Activated CD4-positive, alpha-beta memory T cell treated with anti-CD3 and anti-CD28 coated beads, Interleukin-2, amount 10 ng/mL, durations not matched to agents 7 days and 5 days (primary cell): ENCODE measurements at regions of chr5 and their contacts with region 1.

Region 1: DNA sequence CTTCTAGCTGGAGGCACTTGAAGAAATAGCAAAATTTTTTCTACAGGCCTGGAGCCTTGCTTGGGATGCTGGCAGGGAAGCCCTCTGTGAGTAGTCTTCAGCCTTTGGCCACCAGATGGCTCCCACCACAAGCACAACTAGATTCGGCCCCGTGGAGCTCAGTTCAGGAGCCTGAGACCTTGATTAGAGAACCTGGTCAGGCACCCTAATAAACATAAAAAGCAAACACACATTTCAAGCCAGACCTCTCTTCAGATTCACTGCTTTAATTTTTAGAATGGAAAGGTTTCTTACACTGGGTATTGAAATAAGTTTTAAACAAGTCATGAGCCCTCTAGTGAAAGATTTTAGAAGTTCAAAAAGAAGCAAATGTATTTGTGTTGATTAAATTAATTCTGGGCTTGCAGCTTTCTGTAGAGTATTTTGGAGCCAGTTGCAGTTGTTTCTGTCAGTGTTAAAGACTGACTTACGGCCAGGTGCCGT is 41.4 kb downstream of the GLRX start:
- DNase-seq: peak; percentile 75
- H3K4me3 Mint-ChIP-seq: peak overlapping the region; percentile 34
- H3K27ac Mint-ChIP-seq: no peak overlapping the region
- H3K4me1 Mint-ChIP-seq: peaks cover 27% of the 10 kb centered on the region
- H3K27me3 Mint-ChIP-seq: no peaks in the 10 kb centered on the region

Region 2: DNA sequence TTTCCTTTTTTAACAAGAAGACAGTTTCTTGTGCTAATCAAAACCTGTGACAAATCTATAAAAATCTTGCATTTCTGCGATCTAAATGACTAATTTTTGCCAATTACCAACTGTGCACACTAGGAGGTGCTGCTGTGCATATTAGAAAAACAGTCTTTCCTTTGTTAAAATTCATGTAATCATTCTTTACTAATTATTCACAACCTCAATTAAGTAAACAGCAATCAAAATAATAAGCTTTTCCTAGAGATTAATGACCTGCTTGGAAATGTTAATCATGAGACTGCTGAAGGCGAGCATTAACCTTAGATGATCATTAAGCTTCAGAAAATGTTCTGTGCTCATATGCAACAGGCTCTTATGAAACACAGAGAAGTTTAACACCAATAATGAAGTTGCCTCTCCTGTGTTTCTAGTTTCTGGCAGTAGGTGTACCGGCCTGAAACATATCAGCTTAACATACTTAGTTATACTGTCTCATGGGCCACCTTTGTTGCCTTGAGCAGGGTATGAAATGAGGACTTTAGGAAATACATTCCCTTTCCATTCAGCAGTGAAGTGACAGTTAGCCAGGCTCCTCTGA is 116.8 kb before region 1 on chr5:
- CTCF ChIA-PET with region 1: interaction called, 41 read pairs
- POLR2A ChIA-PET with region 1: interaction called, 3 read pairs
- DNase-seq: peak; percentile 23
- H3K4me3 Mint-ChIP-seq: no peak overlapping the region
- H3K27ac Mint-ChIP-seq: no peak overlapping the region
- H3K4me1 Mint-ChIP-seq: no peaks in the 10 kb centered on the region
- H3K27me3 Mint-ChIP-seq: peaks cover 3% of the 10 kb centered on the region

Region 3: DNA sequence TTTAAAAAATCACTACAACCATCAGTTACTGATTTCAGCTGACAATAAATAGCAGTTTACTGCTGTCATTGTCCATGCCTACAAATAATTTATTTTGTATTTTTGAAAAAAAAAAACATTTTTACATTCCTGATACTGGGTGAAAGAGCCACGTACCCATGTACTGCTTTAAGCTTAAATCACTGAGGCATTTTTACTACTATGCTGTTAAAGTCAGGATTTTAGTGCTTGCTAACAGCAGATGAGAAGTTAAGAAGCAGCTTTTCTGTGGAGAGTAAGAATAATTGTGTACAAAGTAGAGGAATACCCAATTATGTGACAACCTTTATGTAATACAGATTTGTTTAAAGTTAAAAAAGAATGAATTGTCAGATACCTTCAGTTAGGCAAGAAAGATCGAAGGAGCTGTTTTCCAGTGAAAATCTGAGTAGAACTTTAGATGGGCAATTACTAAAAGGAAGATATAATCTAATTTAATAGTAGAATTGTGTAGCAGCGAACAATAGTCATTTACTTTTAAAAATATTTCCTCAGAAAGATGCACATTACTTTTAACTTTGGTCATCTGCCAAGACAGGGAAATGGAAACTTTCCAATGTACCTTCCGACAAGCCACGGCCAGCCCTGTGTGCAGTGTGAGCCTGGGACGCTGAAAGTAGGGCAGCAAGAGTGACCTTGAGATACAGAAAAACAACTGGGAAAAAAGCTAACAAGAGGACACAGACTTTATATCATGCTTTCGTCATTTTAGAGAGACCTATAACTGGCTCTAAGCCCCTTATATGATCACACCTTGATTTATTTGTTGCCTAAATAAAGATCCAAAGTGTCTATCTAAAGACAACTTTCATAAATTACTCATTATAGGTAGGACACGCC is 10.1 kb before region 1 on chr5:
- CTCF ChIA-PET with region 1: interaction called, 26 read pairs
- POLR2A ChIA-PET with region 1: no interaction called
- DNase-seq: no peak
- H3K4me3 Mint-ChIP-seq: no peak overlapping the region
- H3K27ac Mint-ChIP-seq: no peak overlapping the region
- H3K4me1 Mint-ChIP-seq: peaks cover 2% of the 10 kb centered on the region
- H3K27me3 Mint-ChIP-seq: peaks cover 9% of the 10 kb centered on the region

Region 4: DNA sequence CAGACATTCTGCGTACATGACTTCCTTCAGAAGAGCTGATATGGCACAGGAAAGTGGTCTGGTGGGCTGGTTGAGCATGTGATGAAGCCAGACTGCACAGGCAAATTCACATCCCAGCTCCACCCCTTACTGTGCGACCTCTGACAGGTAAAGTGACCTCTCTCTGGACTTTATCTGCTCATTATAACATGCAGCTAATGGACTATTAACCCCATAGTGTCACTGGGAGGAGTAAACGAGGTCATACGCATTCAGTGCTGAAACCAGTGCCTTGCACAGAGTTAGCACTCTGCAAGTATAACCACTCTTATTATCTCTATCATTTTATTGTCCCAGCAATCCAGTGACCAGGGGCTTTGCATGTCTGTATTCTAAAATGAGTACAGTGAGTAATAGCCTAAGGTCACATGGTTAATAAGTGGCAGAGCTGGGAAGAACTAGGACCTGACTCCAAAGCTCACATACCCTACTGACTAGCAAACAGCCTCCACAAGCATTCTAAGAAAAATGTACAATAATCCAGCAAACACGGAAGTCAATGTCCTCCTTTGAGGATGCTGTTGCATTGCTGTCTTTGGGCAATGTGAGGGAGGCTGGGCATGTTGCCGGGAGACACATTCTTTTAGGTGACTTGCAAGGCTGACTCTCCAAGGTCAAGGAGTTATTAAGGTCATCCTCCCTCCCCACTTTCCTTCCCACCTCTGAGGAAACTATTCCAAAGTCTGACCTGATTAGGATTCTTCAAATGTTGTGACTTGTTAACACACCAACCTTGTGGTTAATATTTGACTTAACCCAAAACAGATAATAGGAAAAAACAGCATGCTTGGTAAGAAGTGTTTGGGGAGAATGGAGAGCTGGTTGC is 22.4 kb after region 1 on chr5:
- CTCF ChIA-PET with region 1: interaction called, 79 read pairs
- POLR2A ChIA-PET with region 1: interaction called, 6 read pairs
- DNase-seq: no peak
- H3K4me3 Mint-ChIP-seq: no peak overlapping the region
- H3K27ac Mint-ChIP-seq: no peak overlapping the region
- H3K4me1 Mint-ChIP-seq: peaks cover 14% of the 10 kb centered on the region
- H3K27me3 Mint-ChIP-seq: no peaks in the 10 kb centered on the region

Region 5: DNA sequence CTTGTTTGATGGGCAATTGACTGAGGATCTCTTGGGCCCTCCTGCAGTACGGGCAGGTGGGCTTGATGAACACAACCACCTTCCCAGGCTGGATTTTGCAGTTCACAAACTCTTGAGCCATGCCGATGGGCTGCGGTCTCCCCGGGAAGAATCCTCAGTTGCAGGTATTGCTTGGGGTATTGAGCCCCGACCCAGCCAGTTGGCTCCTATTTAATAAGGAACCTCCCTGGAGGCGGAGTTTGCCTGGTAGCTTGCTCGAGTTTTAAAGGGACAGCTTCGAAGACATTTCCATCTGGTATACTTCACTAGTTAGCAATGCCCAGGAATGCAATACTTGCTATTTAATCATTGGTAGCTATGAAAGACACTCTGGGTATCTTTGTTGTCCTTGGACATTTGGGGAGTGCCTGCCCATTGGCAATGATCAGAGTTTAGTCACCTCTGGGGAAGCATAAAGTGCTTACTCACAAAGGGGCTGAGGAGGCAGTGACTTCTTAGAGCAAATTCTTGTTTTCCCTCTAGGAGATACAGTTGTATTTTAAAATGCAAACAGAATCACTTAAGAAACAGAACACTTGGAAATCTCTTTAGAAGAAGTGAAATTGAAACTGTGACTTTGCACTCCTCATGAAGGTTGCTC is 41.5 kb after region 1 on chr5 and contains the start of gene GLRX:
- CTCF ChIA-PET with region 1: interaction called, 75 read pairs
- POLR2A ChIA-PET with region 1: interaction called, 4 read pairs
- DNase-seq: peak; percentile 72
- H3K4me3 Mint-ChIP-seq: peak within 1 kb of the TSS; percentile 91
- H3K27ac Mint-ChIP-seq: peak within 1 kb of the TSS; percentile 88
- H3K4me1 Mint-ChIP-seq: peaks cover 71% of the 10 kb centered on the region
- H3K27me3 Mint-ChIP-seq: no peaks in the 10 kb centered on the region
- total RNA-seq, gene GLRX: 71.6 to 72.5 TPM

Region 6: GRCh38 chr5:95846554-95847260 is 65.6 kb after region 1 on chr5:
- CTCF ChIA-PET with region 1: interaction called, 354 read pairs
- POLR2A ChIA-PET with region 1: interaction called, 9 read pairs
- DNase-seq: peak; percentile 72
- H3K4me3 Mint-ChIP-seq: no peak overlapping the region
- H3K27ac Mint-ChIP-seq: no peak overlapping the region
- H3K4me1 Mint-ChIP-seq: peaks cover 38% of the 10 kb centered on the region
- H3K27me3 Mint-ChIP-seq: peaks cover 10% of the 10 kb centered on the region

Region 7: GRCh38 chr5:96336351-96336985 is 555.3 kb after region 1 on chr5:
- CTCF ChIA-PET with region 1: interaction called, 12 read pairs
- POLR2A ChIA-PET with region 1: no interaction called
- DNase-seq: peak; percentile 69
- H3K4me3 Mint-ChIP-seq: no peak overlapping the region
- H3K27ac Mint-ChIP-seq: no peak overlapping the region
- H3K4me1 Mint-ChIP-seq: peaks cover 8% of the 10 kb centered on the region
- H3K27me3 Mint-ChIP-seq: no peaks in the 10 kb centered on the region